Endothelial cell of umbilical vein (primary cell): ENCODE measurements at regions of chr7 and their contacts with region 1.

Region 1: GRCh38 chr7:13742811-13743210 is 246.7 kb downstream of the ETV1 start:
- DNase-seq: peak; percentile 34
- H3K4me3 ChIP-seq: no peak overlapping the region
- H3K27ac ChIP-seq: no peak overlapping the region
- H3K4me1 ChIP-seq: no peaks in the 10 kb centered on the region
- H3K27me3 ChIP-seq: no peaks in the 10 kb centered on the region
- CTCF ChIP-seq: peak in 1 of 2 donors; percentile 10
- POLR2A ChIP-seq: no peak

Region 2: DNA sequence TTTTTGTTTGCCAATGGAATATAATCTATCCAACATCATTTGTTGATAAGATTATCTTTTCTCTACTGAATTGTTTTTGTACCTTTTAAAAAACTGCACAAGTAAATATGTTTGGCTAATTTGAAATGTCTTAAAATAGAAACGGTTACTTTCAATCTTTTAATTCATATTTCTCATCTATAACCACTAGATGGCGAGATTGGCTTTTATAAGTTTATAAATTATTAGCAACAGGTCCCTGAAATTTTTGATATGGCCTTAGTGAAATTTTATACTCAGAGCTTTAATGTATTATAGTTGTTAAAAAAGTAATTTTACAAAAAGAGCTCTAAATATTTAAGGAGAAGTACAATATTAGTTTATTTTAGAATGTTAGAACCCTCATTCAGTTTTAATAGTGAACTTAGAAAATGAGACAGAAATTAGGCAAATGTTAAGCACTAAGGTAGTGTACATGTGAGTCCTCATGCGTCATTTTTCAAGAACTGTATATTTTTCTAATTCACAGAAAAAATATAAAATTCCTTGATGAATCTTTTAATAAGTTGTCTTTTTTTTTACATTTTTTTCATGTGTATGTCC is 462.9 kb before region 1 on chr7:
- CTCF ChIA-PET with region 1: no interaction called
- POLR2A ChIA-PET with region 1: no interaction called
- dilution Hi-C with region 1: no loop called
- intact Hi-C with region 1: loop called (anchors 1 kb)
- DNase-seq: peak; percentile 24
- H3K4me3 ChIP-seq: no peak overlapping the region
- H3K27ac ChIP-seq: no peak overlapping the region
- H3K4me1 ChIP-seq: no peaks in the 10 kb centered on the region
- H3K27me3 ChIP-seq: no peaks in the 10 kb centered on the region
- CTCF ChIP-seq: peak in 1 of 2 donors; percentile 18
- POLR2A ChIP-seq: no peak

Region 3: GRCh38 chr7:13442226-13442625 is 300.6 kb before region 1 on chr7:
- CTCF ChIA-PET with region 1: no interaction called
- POLR2A ChIA-PET with region 1: no interaction called
- dilution Hi-C with region 1: no loop called
- intact Hi-C with region 1: no loop called
- DNase-seq: no peak
- H3K4me3 ChIP-seq: no peak overlapping the region
- H3K27ac ChIP-seq: no peak overlapping the region
- H3K4me1 ChIP-seq: no peaks in the 10 kb centered on the region
- H3K27me3 ChIP-seq: no peaks in the 10 kb centered on the region
- CTCF ChIP-seq: no peak
- POLR2A ChIP-seq: no peak